Activated T-helper 2 cell treated with anti-CD3 and anti-CD28 coated beads, Interferon-gamma antibody, Interleukin-2, Interleukin-4, amounts not matched to agents 10 μg/mL and 5 μg/mL and 100 μg/mL, durations not matched to agents 14 hours and 24 hours and 36 hours (primary cell): ENCODE measurements at regions of chr12 and their contacts with region 1.

Region 1: DNA sequence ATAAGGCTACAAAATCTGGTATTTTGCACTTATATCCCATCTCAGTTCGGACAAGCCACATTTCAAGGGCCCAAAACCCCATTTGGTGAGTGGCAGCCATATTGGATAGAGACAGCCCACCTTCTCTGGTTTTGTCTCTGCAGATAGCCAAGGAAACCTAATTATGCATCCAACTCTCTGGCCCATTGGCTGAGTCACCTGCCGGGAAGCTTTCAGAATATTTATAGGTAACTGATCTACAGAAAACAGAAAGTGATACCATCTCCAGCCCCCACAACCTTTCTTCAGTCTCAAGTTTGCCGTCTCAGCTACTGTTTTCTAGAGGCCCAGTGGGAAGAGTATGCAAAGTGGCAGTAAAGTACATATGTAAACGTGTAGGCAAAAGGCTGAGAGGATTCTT is 33.7 kb upstream of the PPP1CC start:
- DNase-seq: peak; percentile 24
- H3K4me3 Mint-ChIP-seq: peak overlapping the region; percentile 17
- H3K27ac Mint-ChIP-seq: peak overlapping the region; percentile 94
- H3K4me1 Mint-ChIP-seq: peaks cover 50% of the 10 kb centered on the region
- H3K27me3 Mint-ChIP-seq: no peaks in the 10 kb centered on the region

Region 2: DNA sequence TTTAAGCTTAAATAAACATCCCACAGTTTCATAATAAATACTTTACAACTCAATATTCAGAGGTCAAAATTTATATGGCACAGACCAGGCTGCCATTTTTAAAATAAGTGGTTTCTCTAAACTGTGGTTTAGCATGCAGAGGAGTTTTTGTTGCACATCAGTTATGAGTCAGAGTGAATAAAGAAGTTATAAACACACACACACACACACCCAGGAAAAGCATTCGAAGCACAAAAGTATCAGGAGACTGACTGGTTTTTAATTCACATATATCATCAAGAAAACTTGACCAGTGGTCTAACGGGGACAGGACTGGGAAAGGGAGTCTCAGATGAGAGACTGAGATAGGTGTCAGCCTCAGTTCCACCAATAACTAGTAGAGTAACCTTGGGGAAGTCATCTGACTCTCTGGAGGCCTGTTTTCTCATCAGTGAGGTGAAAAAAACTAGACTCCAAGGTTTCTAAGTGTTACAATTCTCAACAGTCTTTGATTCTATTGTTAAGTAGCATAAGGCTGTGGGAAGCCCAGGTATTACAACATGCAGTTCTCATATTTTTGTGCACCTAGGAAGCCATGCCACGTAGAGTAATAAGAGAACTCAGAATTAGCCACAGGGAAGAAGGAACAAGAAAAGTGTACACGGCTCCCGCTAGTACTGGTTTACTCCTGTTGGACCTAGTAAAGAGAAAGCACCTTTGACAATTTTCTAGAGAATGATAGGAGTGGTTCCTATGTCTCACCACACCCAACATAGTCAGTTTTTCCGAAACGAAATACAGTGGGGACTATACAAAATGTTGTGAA is 198.5 kb before region 1 on chr12:
- intact Hi-C with region 1: loop called (anchors 1 kb)
- DNase-seq: peak; percentile 50
- H3K4me3 Mint-ChIP-seq: peak overlapping the region; percentile 98
- H3K27ac Mint-ChIP-seq: peak overlapping the region; percentile 96
- H3K4me1 Mint-ChIP-seq: peaks cover 63% of the 10 kb centered on the region
- H3K27me3 Mint-ChIP-seq: no peaks in the 10 kb centered on the region

Region 3: GRCh38 chr12:110742718-110743570 is 33.5 kb before region 1 on chr12 and contains the start of gene PPP1CC:
- intact Hi-C with region 1: loop called (anchors 1 kb)
- DNase-seq: peak; percentile 89
- H3K4me3 Mint-ChIP-seq: peak within 1 kb of the TSS; percentile 100
- H3K27ac Mint-ChIP-seq: peak within 1 kb of the TSS; percentile 99
- H3K4me1 Mint-ChIP-seq: peaks cover 38% of the 10 kb centered on the region
- H3K27me3 Mint-ChIP-seq: no peaks in the 10 kb centered on the region
- total RNA-seq, gene PPP1CC: 241 and 244 TPM in 2 replicates

Region 4: GRCh38 chr12:110791589-110791988 is 15.2 kb after region 1 on chr12:
- intact Hi-C with region 1: loop called (anchors 1 kb)
- DNase-seq: no peak
- H3K4me3 Mint-ChIP-seq: no peak overlapping the region
- H3K27ac Mint-ChIP-seq: no peak overlapping the region
- H3K4me1 Mint-ChIP-seq: peaks cover 11% of the 10 kb centered on the region
- H3K27me3 Mint-ChIP-seq: no peaks in the 10 kb centered on the region